Ascending aorta (tissue), 2 donors: ENCODE measurements at regions of chr2 and their contacts with region 1.

Region 1: DNA sequence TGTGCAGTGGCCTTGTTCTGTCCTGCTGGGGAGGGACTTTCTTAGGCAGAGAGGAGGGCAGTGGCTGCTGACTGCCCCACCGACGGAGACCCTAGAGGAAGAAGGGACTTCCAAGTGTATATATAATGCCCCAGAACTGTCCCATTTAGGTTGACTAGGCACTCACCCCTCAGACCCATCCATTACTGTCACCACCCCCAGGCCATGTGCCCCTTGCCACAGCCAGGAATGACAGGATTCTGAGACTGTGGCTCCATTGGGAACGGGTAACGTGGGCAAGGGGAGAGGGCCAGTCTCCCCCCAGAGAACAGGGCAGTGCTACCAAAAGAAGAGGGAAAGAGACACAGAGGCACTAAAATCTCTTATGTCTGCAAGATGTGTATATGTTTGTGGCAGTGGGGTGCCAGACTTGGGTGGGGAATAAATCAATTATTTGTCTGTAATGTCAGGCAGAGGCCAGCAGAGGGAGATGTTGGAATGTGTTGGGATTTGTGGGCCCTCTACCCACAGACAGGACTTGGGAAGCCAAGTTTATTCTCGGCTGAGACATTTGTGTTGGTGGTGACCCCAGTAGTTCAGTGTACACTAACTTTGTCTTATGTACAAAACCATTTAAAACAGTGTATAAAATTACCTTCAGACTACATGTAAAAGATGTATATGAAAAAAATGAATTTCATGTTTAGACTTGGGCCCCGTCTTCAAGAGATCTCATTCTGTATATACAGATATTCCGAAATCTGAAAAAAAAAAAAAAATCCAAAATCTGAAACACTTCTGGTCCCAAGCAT is 24.0 kb upstream of the TMEM37 start:
- DNase-seq: peak in 1 of 2 donors; percentile 74
- H3K4me3 ChIP-seq: no peak overlapping the region
- H3K27ac ChIP-seq: no peak overlapping the region
- H3K4me1 ChIP-seq: no peaks in the 10 kb centered on the region
- H3K27me3 ChIP-seq: no peaks in the 10 kb centered on the region
- CTCF ChIP-seq: peak; percentile 70 to 85 (median 77)

Region 2: GRCh38 chr2:119476301-119477021 is 68.8 kb after region 1 on chr2:
- intact Hi-C with region 1: loop called (anchors 1 kb)
- DNase-seq: peak in 1 of 2 donors; percentile 70
- H3K4me3 ChIP-seq: no peak overlapping the region
- H3K27ac ChIP-seq: no peak overlapping the region
- H3K4me1 ChIP-seq: peaks cover 0 to 2% of the 10 kb centered on the region in 2 donors
- H3K27me3 ChIP-seq: no peaks in the 10 kb centered on the region
- CTCF ChIP-seq: peak; percentile 86 to 99 (median 96)

Region 3: DNA sequence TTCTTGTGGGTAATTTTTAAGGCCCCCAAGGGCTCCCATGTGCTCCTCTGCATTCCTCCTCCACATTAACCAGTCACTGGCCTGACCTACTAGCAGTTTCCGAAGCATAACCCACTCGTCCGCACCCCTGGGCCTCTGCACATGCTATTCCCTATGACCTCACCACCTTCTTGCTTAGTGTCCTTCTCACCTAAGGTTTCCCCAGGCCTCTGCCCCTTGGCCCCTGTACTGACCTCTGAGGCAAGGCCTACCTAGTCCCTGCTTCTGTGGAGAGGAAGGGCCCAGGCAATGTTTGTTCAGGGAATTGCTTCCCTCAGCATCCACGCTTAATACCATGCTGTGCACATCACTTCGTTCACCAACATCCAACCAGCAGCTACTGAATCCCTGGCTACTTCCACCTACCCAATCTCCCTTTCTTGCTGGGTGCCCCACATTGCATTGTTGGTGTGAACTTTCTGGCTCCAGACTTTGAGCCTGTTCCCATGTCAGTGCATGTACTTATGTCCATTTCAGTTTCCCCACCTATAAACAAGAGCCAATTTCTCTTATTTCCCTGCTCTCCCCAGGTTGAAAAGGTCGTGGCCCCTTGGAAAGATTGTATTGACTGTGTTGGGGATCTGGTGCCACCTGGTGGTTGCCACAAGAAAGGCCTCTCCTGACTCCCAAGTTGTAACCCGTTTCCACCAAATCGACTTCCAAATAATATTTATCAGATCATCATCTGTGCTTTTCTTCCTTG is 252.1 kb after region 1 on chr2:
- intact Hi-C with region 1: loop called (anchors 2 kb)
- DNase-seq: no peak
- H3K4me3 ChIP-seq: no peak overlapping the region
- H3K27ac ChIP-seq: no peak overlapping the region
- H3K4me1 ChIP-seq: no peaks in the 10 kb centered on the region
- H3K27me3 ChIP-seq: no peaks in the 10 kb centered on the region
- CTCF ChIP-seq: peak; percentile 70 to 93 (median 83)